GM10248 (cell line): ENCODE measurements at regions of chr3 and their contacts with region 1.

Region 1: GRCh38 chr3:101635954-101636798 is 40.8 kb downstream of the ZBTB11 start:
- DNase-seq: peak; percentile 69
- CTCF ChIP-seq: peak; percentile 66

Region 2: GRCh38 chr3:101611023-101611422 is 25.2 kb before region 1 on chr3:
- CTCF ChIA-PET with region 1: no interaction called
- POLR2A ChIA-PET with region 1: no interaction called
- DNase-seq: no peak
- CTCF ChIP-seq: no peak

Region 3: GRCh38 chr3:101646726-101647125 is 10.6 kb after region 1 on chr3:
- CTCF ChIA-PET with region 1: interaction called, 20 read pairs
- POLR2A ChIA-PET with region 1: no interaction called
- DNase-seq: no peak
- CTCF ChIP-seq: no peak

Region 4: GRCh38 chr3:101665851-101666250 is 29.7 kb after region 1 on chr3:
- CTCF ChIA-PET with region 1: interaction called, 11 read pairs
- POLR2A ChIA-PET with region 1: no interaction called
- DNase-seq: no peak
- CTCF ChIP-seq: no peak